Heart right ventricle (tissue), 16 donors: ENCODE measurements at regions of chr4 and their contacts with region 1.

Region 1: GRCh38 chr4:102826890-102827673 is at the start of gene UBE2D3:
- DNase-seq: peak; percentile 94 to 95
- ATAC-seq: peak; percentile 72 to 87 (median 75)
- H3K4me3 ChIP-seq: peak within 1 kb of the TSS; percentile 71 to 94 (median 88)
- H3K27ac ChIP-seq: peak within 1 kb of the TSS; percentile 97 to 100 (median 100)
- H3K4me1 ChIP-seq: peaks cover 2 to 54% (median 40%) of the 10 kb centered on the region in 9 donors
- H3K27me3 ChIP-seq: no peaks in the 10 kb centered on the region
- CTCF ChIP-seq: peak in 3 of 9 donors; percentile 17 to 38 (median 33)
- total RNA-seq, gene UBE2D3: 210 to 297 (median 250) TPM

Region 2: DNA sequence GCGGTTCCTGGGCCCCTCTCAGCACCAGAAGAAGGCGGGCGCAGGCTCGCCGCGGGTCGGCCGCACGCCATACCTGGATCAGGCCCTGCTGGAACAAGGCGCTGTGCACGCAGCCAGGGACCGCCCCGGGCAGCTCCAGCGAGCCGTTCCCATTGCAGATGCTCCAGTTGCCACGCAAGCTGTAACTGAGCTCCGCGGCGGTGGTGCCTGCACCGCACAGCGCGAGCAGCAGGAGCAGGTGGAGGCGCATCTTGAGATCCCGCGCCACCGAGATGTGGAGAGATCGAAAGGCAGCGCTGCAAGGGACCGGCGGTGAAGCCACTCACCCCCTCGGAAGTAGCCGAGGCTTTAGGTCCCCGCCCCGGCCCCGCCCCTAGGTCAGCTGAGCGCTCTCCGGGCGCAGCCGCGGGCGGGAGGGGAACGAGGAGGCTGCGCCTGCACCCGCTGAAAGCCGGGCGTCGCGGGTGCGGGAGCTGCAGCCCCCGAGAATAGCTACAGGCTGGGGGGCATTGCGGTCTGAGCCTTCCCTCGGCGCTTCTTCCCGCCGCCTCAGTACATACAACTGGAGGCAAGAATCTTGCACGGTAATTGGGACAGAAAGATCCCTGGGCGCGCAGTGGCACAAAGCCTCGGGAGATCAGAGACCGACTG is 66.3 kb before region 1 on chr4 and contains the start of gene MANBA:
- intact Hi-C with region 1: loop called in 3 of 10 experiments (anchors 5 to 10 kb)
- DNase-seq: peak; percentile 84 to 86
- ATAC-seq: peak; percentile 97 to 99 (median 98)
- H3K4me3 ChIP-seq: peak within 1 kb of the TSS; percentile 74 to 97 (median 84)
- H3K27ac ChIP-seq: peak within 1 kb of the TSS; percentile 11 to 94 (median 80)
- H3K4me1 ChIP-seq: peaks cover 0 to 40% (median 17%) of the 10 kb centered on the region in 9 donors
- H3K27me3 ChIP-seq: no peaks in the 10 kb centered on the region
- CTCF ChIP-seq: peak in 3 of 9 donors; percentile 10 to 29 (median 11)
- total RNA-seq, gene MANBA: 17.9 to 47.7 (median 28.5) TPM

Region 3: DNA sequence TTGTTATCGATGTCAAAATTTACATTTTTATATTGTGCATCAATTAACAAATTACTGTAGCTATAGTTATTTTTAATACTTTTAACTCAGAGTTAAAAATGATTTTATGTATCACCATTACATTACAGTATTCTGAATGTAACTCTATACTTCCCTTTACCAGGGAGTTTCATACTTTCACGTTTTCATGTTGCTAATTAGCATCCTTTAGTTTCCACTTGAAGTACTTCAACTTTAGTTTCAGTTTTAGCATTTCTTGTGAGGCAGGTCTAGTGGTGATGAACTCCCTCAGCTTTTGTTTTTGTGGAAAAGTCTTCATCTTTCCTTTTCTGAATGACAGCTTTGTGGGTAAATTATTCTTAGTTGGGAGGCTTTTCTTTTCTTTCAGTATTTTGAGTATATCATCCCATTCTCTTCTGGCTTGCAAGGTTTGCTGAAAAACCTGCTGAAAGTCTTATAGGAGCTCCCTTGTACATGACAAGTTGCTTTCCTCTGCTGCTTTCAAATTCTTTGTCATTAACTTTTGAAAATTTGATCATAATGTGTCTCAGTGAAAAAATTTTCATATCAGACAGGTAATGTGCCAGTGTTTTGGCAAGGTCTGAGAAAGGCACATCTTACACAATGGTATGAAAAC is 31.9 kb after region 1 on chr4:
- intact Hi-C with region 1: no loop called
- DNase-seq: no peak
- ATAC-seq: no peak
- H3K4me3 ChIP-seq: no peak overlapping the region
- H3K27ac ChIP-seq: no peak overlapping the region
- H3K4me1 ChIP-seq: peaks cover 0 to 16% (median 0%) of the 10 kb centered on the region in 9 donors
- H3K27me3 ChIP-seq: no peaks in the 10 kb centered on the region
- CTCF ChIP-seq: no peak

Region 4: GRCh38 chr4:103019308-103020124 is 192.4 kb after region 1 on chr4 and contains the start of gene SLC9B1:
- intact Hi-C with region 1: loop called in 2 of 10 experiments (anchors 5 to 10 kb)
- DNase-seq: peak; percentile 94 to 95
- ATAC-seq: peak; percentile 99 to 100 (median 100)
- H3K4me3 ChIP-seq: peak within 1 kb of the TSS; percentile 36 to 64 (median 56)
- H3K27ac ChIP-seq: peak within 1 kb of the TSS; percentile 67 to 92 (median 90)
- H3K4me1 ChIP-seq: peaks cover 0 to 15% (median 7%) of the 10 kb centered on the region in 9 donors
- H3K27me3 ChIP-seq: no peaks in the 10 kb centered on the region
- CTCF ChIP-seq: no peak
- total RNA-seq, gene SLC9B1: 0.19 to 1.4 (median 0.67) TPM in 7 of 10 donors, not detected in the others

Region 5: GRCh38 chr4:103354006-103354405 is 526.9 kb after region 1 on chr4:
- intact Hi-C with region 1: no loop called
- DNase-seq: no peak
- ATAC-seq: no peak
- H3K4me3 ChIP-seq: no peak overlapping the region
- H3K27ac ChIP-seq: no peak overlapping the region
- H3K4me1 ChIP-seq: no peaks in the 10 kb centered on the region
- H3K27me3 ChIP-seq: no peaks in the 10 kb centered on the region
- CTCF ChIP-seq: no peak